Cardiac septum (tissue), 1 donor: ENCODE measurements at regions of chr1 and their contacts with region 1.

Region 1: DNA sequence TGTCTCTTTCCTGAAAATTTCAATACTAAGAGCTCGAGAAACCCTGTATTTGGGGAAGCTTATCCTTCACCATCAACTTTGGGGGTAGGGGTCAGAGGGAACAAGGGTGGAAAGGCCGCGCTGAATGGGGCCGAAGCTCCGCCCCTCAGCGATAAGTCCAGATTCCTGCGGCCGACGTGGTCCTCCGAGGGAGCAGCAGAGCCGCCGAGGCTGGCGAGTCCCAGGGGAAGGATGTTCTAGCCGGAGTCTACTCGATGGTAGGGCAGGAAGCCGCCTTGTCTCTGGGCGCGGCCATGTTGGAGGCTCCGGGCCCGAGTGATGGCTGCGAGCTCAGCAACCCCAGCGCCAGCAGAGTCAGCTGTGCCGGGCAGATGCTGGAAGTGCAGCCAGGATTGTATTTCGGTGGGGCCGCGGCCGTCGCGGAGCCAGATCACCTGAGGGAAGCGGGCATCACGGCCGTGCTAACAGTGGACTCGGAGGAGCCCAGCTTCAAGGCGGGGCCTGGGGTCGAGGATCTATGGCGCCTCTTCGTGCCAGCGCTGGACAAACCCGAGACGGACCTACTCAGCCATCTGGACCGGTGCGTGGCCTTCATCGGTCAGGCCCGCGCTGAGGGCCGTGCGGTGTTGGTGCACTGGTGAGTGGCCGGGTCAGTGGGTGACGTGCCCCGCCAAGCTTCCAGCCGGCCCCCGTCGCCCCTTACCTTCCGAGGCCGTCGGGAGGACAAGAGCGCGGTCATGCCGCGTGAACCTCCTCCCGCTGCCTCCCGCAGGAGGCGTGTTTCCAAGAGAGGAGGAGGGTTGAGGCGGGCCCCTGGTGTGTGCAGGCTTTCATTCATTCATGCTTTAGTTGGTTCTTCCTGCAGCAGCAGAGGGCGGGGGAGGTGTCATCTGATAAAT is at the start of gene DUSP12:
- DNase-seq: peak; percentile 96
- total RNA-seq, gene DUSP12: 8.2 TPM

Region 2: DNA sequence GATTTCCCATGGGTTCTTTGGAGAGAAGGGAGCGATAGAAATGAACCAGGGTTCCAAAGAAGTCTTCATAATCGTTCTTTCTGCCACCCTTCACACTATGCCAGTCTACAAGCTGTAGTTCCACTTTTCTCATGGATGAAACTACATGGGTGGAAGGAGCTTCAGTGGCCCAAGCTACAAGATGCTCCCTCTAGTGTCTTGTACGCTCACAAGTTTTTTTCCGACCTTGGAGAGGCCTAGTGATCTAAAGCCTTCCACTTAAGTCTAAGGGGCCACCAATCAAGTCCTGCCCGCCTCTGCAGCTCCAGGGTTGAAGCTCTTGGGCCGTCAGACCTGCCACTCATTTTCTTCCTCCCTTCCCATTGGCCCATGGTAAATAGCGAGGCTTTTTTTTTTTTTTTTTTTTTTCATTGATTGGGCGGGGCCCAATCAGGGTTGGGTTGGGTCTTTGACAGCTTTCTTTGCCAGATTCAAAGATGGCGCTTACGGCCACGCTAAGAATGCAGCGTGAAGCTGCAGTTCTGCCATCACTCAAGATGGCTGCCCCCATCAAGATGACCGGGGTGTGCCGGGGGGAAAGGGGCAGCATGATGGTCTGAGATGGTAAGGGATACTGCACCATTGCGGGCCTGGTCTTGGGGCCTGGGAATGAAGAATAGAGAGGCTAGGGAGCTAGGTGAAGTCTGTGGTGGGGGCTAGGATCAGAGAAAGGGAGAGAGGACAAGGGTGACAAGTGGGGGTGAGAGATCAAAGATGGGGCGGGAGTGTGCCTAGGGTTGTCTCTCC is 524.0 kb before region 1 on chr1 and contains the start of gene TOMM40L:
- intact Hi-C with region 1: loop called (anchors 10 kb)
- DNase-seq: peak; percentile 91
- total RNA-seq, gene TOMM40L: 34.1 TPM

Region 3: DNA sequence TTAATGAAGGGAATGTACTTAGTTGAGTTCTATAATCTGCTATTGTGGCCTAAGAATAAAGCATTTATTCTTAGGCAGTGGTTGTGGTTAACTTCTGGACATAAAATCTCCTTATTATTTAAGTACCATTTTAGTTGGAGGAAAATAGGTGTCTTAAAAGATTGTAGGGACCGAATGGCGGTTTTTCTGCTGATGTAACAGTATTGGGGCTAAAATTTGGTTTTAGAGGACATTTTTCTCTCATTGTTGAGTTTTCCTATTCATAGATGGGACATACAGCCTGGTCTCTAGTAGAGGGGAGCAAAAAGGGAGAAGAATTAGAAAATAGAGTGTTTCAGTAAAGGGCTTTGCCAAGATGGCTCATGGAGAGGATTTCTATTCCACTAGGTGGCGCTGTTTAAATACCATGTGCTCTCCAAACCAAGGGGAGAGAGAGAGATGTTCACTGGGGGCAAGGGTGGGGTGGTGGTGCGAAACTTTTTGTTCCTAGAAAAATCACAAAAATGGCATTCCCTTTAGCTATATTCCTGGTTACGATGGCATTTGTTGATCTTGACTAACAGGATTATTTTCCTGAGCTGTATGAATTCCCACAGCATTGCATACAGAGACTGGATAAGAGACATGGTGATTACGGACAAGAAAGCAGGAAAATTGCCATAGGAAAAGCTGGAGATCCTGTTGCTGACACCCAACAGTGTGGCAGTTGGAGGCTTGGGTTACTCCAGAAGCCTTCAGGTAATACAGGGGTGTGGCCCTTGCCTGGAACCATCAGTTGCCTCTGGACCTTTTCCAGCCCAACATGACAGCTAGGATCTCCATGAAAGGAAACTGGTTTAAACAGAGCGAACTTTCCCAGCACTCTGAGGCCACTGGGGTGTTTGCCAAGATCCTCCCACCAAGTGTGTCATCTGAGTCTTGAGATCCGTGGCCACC is 262.7 kb before region 1 on chr1:
- intact Hi-C with region 1: loop called (anchors 10 kb)
- DNase-seq: no peak

Region 4: DNA sequence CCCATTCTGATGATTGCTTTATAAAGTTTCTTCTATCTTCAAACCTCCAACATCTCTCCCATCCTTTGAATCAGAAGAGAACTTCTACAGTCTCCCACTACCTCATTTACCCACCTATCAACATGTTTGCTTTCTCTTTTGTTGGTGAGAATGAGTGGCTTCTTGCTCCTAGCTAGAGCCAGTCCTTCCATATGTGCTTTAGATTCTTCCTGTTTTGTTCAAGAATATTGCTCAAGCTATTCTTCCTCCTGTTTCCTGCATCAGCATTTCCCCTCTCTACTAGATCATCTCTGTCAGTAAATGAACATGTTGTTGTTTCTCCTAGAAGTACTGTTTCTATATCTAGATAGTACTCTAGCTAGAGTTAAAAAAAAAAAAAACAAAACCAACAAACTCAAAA is 22.6 kb after region 1 on chr1:
- intact Hi-C with region 1: no loop called
- DNase-seq: no peak

Region 5: GRCh38 chr1:162094271-162094670 is 344.5 kb after region 1 on chr1:
- intact Hi-C with region 1: no loop called
- DNase-seq: no peak